Heart right ventricle (tissue), 16 donors: ENCODE measurements at regions of chr15 and their contacts with region 1.

Region 1: GRCh38 chr15:80942746-80943555 is 46.7 kb downstream of the MESD start:
- DNase-seq: peak in 1 of 2 donors; percentile 51
- ATAC-seq: peak; percentile 62 to 91 (median 84)
- H3K4me3 ChIP-seq: no peak overlapping the region
- H3K27ac ChIP-seq: no peak overlapping the region
- H3K4me1 ChIP-seq: peaks cover 0 to 12% (median 0%) of the 10 kb centered on the region in 9 donors
- H3K27me3 ChIP-seq: no peaks in the 10 kb centered on the region
- CTCF ChIP-seq: peak in 2 of 9 donors; percentile 9 to 16

Region 2: GRCh38 chr15:80567721-80568157 is 375.2 kb before region 1 on chr15:
- intact Hi-C with region 1: loop called in 1 of 10 experiments (anchors 10 kb)
- DNase-seq: peak in 1 of 2 donors; percentile 64
- ATAC-seq: peak; percentile 63 to 88 (median 83)
- H3K4me3 ChIP-seq: no peak overlapping the region
- H3K27ac ChIP-seq: no peak overlapping the region
- H3K4me1 ChIP-seq: peaks cover 0 to 8% (median 0%) of the 10 kb centered on the region in 9 donors
- H3K27me3 ChIP-seq: peaks cover 0 to 9% (median 0%) of the 10 kb centered on the region in 7 donors
- CTCF ChIP-seq: peak; percentile 41 to 80 (median 71)

Region 3: DNA sequence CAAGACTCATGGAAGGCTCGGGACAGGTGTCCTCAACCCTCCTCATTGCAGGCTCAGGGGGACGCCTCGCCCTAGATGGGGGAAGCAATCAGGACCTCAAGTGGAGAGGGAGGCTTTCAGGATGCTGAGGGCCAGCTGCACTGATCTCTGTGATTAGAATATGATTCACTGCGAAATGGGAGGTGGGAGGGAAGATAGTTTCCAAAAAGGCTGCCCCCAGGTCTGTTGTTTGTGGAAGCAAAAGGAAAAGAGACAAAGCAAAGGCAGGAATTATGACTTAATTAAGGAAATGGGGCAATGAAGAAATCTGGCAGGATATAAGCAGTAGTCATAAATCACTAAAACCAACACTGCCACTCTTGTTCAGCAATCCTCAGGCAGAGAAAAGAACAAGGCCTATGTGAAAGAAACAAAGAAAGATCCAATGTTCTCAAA is 333.4 kb before region 1 on chr15:
- intact Hi-C with region 1: loop called in 1 of 10 experiments (anchors 10 kb)
- DNase-seq: no peak
- ATAC-seq: no peak
- H3K4me3 ChIP-seq: no peak overlapping the region
- H3K27ac ChIP-seq: no peak overlapping the region
- H3K4me1 ChIP-seq: peaks cover 0 to 18% (median 5%) of the 10 kb centered on the region in 9 donors
- H3K27me3 ChIP-seq: no peaks in the 10 kb centered on the region
- CTCF ChIP-seq: no peak

Region 4: GRCh38 chr15:80789796-80790195 is 153.2 kb before region 1 on chr15:
- intact Hi-C with region 1: loop called in 1 of 10 experiments (anchors 5 kb)
- DNase-seq: no peak
- ATAC-seq: no peak
- H3K4me3 ChIP-seq: no peak overlapping the region
- H3K27ac ChIP-seq: no peak overlapping the region
- H3K4me1 ChIP-seq: peaks cover 0 to 14% (median 0%) of the 10 kb centered on the region in 9 donors
- H3K27me3 ChIP-seq: peaks cover 0 to 18% (median 14%) of the 10 kb centered on the region in 7 donors
- CTCF ChIP-seq: no peak

Region 5: DNA sequence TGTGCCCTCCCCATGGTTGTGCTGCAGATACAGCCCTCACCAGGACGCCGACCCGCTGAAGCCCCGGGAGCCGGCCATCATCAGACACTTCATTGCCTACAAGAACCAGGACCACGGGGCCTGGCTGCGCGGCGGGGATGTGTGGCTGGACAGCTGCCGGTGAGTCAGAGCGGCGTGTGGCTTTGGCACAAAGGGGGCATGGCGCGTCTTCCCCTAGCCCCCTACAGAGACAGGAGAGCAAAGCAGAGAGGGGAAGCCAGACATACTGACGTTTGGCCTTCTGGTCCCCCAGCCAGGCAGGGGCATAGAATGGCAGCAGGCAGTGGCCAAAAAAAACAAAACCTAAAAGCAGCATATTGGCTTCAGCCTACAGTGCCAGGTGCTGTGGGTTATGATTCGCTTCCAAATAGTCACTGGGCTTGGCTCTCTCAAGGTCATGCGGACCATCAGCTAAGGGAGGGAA is 17.3 kb before region 1 on chr15:
- intact Hi-C with region 1: loop called in 1 of 10 experiments (anchors 2 kb)
- DNase-seq: no peak
- ATAC-seq: no peak
- H3K4me3 ChIP-seq: no peak overlapping the region
- H3K27ac ChIP-seq: no peak overlapping the region
- H3K4me1 ChIP-seq: no peaks in the 10 kb centered on the region
- H3K27me3 ChIP-seq: no peaks in the 10 kb centered on the region
- CTCF ChIP-seq: no peak